Activated CD8-positive, alpha-beta T cell treated with anti-CD3 and anti-CD28 coated beads, Interleukin-2, amount 10 ng/mL, durations not matched to agents 7 days and 5 days (primary cell): ENCODE measurements at regions of chr9 and their contacts with region 1.

Region 1: DNA sequence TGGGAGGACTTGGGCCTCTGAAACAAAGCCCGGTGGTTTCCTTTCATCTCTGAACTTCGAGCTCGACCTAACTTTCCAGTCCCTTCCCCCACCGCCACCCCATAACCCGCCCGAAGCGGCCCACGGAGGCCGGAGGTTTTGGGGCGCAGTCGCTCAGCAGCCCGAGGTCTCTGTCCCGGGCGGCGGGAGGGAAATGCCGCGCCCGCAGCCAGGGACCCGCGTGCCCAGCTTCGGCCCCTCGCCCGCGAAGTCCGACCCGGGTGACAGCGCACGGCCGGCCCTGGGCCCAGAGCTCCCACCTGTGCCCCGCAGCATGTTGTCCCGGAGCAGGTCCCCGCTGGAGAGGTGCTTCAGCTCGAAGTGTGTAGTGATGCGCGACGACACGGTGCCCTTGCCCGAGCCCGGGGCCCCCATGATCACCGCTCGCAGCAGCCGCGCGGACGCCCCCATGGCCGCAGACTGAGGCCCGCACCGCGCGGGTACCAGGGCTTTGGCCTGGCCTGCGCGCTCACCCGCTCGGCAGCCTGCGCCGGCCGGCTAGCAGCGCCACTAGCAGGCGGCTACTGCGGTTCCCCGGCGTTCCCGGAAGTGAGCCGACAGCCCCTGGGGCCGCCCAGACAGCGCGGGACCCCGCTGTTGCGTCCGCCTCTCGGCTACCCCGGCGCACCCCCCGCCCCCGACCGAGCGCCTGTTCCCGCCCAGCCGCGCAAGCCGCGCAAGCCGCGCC is at the start of gene AK3:
- DNase-seq: peak; percentile 93
- ATAC-seq: peak; percentile 94
- H3K4me3 Mint-ChIP-seq: peak within 1 kb of the TSS; percentile 88
- H3K27ac Mint-ChIP-seq: peak within 1 kb of the TSS; percentile 90
- H3K4me1 Mint-ChIP-seq: peaks cover 30% of the 10 kb centered on the region
- H3K27me3 Mint-ChIP-seq: no peaks in the 10 kb centered on the region
- total RNA-seq, gene AK3: 34.8 to 35.4 TPM

Region 2: DNA sequence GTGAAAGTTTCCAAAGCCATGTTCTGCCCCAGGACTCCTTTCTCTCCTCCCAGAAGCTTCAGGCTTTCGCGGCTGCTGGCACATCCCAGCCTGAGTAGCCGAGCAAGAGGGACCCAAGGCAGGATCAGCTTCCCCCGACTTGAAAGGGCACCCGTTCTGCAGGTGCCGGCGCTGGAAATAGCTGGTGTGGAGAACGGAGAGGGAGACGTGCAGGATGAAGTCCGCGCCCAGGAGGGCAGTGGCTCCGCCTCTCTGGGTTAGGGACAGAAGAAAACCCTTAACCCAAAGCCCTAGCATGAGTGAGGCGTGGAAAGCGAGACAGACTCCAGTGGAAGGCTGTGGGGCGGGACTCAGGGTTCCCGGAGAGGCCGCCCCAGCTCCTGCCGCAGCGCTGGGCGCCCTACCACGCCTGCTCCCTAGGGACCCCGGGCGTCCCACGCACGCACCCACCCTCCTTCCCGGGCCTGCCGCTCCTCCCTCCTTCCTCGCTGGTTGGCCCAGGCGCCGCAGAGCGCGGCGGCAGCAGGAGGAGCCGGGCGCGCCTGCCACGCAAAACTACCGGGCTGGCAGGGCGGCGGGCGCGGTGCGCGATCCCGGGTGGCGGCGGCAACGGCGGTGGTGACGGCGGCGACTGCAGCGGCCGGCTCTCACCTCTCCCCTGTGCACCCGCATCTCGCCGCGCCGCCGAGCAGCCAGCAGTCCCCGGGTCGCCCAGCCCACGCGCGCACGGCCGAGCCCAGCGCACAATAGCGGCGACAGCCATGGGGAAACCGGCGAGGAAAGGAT is 250.7 kb before region 1 on chr9 and contains the start of gene SLC1A1:
- CTCF ChIA-PET with region 1: no interaction called
- POLR2A ChIA-PET with region 1: no interaction called
- DNase-seq: peak; percentile 30
- ATAC-seq: peak; percentile 72
- H3K4me3 Mint-ChIP-seq: peak within 1 kb of the TSS; percentile 67
- H3K27ac Mint-ChIP-seq: no peak within 1 kb of the TSS
- H3K4me1 Mint-ChIP-seq: peaks cover 20% of the 10 kb centered on the region
- H3K27me3 Mint-ChIP-seq: peaks cover 53% of the 10 kb centered on the region
- total RNA-seq, gene SLC1A1: 0.13 TPM in 1 of 2 experiments, not detected in the other

Region 3: DNA sequence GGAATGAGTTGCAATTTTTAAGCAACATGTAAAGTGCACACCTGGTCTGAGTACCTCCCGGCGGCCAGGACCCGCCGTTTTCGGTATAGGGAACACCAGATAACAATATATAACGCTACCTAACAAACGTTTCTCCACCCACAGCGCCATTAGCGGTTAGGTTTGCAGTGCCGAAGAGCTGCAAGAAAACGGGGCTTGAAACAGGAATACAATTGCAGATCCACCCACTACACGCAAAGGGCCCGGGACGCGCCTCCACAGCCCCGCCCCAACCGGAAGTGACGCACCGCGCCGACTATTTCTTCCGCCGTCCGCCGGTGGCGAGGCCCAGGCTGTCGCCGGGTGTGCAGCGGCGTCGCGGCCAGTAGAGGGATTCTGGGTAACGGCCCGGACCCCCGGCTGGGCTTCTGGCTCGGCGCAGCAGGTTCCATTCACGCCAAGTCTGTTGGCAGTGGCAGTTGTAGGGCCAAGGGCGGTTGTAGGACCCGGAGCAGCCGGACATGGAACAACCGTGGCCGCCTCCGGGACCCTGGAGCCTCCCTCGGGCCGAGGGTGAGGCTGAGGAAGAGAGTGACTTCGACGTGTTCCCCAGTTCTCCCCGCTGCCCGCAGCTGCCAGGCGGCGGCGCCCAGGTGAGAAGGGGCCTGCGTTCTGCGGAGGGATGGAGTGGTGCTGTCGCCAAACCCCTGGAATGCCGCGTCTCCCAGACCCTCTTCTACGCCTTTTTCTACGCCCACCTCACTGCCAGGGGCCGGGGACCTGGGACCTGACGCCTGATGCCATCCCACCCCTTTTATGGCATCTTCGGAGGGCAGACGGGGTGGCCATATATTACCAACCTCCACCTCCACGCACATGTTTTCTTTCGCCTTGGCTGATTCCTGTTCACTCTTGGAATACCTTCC is 61.3 kb before region 1 on chr9 and contains the start of gene CDC37L1:
- CTCF ChIA-PET with region 1: interaction called, 5 read pairs
- POLR2A ChIA-PET with region 1: interaction called, 19 read pairs
- DNase-seq: peak; percentile 99
- ATAC-seq: peak; percentile 98
- H3K4me3 Mint-ChIP-seq: no peak within 1 kb of the TSS
- H3K27ac Mint-ChIP-seq: no peak within 1 kb of the TSS
- H3K4me1 Mint-ChIP-seq: no peaks in the 10 kb centered on the region
- H3K27me3 Mint-ChIP-seq: peaks cover 5% of the 10 kb centered on the region
- total RNA-seq, gene CDC37L1: 8.0 to 8.9 TPM

Region 4: DNA sequence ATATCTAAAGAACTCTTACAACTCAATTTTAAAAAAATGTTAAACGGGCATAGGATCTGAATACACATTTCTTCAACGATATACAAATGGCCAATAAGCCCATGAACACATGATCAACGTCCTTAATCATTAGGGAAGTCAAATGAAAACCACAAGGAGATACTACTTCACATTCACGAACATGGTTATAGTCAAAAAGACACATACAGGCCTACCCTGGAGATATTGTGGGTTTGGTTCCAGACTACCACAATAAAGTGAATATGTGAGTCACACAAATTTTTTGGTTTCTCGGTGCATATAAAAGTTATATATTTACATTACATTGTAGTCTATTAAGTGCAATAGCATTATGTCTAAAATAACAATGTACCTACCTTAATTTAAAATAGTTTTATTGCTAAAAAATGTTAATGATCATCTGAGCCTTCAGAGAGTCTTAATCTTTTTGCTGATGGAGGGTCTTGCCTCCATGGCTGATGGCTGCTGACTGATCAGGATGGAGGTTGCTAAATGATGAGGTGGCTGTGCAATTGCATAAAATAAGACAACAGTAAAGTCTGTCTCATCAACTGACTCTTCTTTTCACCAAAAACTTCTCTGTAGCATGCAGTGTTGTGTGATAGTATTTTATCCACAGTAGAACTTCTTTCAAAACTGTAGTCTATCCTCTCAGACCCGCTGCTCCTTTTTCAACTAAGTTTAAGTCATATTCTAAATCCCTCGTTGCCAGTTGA is 14.9 kb before region 1 on chr9:
- CTCF ChIA-PET with region 1: interaction called, 5 read pairs
- POLR2A ChIA-PET with region 1: interaction called, 14 read pairs
- DNase-seq: no peak
- ATAC-seq: no peak
- H3K4me3 Mint-ChIP-seq: no peak overlapping the region
- H3K27ac Mint-ChIP-seq: no peak overlapping the region
- H3K4me1 Mint-ChIP-seq: peaks cover 18% of the 10 kb centered on the region
- H3K27me3 Mint-ChIP-seq: no peaks in the 10 kb centered on the region